Activated CD4-positive, alpha-beta T cell treated with anti-CD3 and anti-CD28 coated beads, Interleukin-2, amount 10 ng/mL, durations not matched to agents 24 days and 14 days (primary cell): ENCODE measurements at regions of chr13 and their contacts with region 1.

Region 1: DNA sequence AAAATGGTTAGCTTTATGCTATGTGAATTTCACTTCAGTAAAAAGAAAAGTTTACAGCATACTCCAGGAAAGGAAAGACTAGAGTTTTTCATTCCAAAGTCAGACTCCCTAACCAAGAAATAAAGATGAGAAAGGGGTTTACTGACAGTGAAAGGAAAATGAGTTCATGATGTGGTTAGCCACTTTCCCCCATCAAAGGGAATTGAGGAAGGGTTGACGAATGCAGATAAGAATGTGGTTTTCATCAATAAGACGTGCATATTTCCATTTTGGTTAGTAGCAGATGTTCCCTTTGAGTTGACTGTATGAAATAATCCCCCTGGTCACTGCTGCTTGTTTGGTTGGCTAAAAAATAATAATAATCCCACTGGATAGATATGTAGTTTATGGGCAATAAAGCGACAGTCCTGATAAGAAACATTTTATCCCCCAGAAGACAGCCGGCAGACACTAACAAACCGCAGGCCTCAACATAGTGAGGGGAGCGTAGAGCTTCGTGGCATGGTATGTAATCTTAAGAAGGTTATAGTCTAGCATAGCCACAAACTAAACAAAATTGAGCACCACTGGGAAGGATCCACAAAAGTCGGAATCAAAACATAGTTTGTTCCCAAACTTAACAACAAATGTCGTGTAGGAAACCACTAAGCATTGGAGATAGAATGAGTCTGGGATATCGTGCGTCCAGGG is 114.8 kb downstream of the COL4A2 start:
- DNase-seq: peak; percentile 74
- H3K4me3 Mint-ChIP-seq: no peak overlapping the region
- H3K27ac Mint-ChIP-seq: peak overlapping the region; percentile 42
- H3K4me1 Mint-ChIP-seq: peaks cover 17% of the 10 kb centered on the region
- H3K27me3 Mint-ChIP-seq: peaks cover 87% of the 10 kb centered on the region

Region 2: DNA sequence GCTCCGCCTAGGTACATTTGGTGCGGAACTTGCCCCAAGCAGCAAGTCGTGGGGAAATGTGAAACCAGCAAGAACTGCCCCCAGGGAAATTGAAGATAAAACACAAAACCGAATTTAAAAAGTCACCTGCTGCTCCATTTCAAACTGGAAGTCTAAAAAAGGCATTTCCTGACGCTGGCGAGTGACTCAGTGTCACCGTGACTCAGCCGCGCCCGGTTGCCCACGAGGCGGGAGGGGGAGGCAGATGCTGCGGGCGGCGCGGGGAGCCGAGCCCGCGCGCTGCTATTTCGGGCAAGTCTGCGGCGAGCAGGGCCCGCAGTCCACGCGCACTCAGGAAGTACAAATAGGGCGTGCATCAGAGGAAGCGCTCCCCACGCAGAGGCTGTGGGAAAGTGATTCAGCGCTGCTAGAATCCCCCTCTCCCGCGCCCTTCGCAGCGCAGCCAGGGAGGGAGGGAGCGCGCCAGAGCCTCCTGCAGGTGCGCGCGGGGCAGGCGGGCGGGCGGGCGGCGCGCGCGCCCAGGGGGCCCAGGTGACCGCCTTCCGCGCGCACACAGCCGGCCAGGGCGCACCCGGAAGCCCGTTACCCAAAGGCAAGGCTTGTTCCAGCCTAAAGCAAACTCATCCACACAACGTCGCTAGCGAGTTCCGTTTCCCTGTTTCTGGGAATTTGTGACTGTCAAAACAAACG is 283.7 kb before region 1 on chr13:
- intact Hi-C with region 1: loop called (anchors 10 kb)
- DNase-seq: peak; percentile 90
- H3K4me3 Mint-ChIP-seq: peak overlapping the region; percentile 84
- H3K27ac Mint-ChIP-seq: peak overlapping the region; percentile 82
- H3K4me1 Mint-ChIP-seq: peaks cover 13% of the 10 kb centered on the region
- H3K27me3 Mint-ChIP-seq: peaks cover 58% of the 10 kb centered on the region

Region 3: DNA sequence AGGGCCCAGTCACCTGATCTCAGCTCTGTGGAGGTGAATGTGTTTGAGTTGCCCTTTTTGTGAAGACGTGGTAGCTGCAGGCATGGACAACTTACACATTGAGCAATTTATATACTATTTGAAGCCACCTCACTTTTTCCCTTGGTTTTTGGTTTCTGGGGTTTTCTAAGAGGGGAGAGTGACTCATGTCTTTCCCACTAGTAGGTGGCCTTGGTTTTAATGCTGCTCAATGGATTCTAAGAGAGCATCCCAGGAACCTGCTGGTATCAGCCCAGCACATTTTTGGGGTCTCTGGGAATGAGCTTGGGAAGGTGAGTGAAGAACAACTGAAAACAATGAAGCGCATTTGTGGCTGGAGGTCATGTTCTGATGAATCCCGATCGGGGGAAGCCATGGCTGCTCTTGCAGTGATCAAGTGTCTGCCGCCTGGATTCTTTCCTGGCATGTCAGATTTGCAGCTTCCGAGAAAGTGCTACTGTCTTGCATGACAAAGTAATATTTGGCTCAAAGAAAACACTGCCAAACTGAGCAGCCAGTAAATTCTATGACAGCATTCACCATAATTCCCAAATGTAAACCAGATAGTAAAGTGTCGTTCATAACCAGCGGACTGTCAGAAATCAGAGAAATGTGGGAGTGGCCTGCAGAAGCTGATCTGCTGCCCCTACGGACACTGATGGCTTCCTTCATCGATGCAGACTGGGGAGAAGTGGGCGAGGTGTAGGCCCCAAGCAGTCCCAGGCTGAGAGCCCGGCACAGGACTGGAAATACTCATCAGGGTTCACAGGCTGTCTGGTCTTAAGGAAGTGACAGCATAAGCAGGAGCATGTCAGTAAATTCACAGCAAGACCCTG is 16.0 kb before region 1 on chr13:
- intact Hi-C with region 1: loop called (anchors 1 kb)
- DNase-seq: no peak
- H3K4me3 Mint-ChIP-seq: no peak overlapping the region
- H3K27ac Mint-ChIP-seq: no peak overlapping the region
- H3K4me1 Mint-ChIP-seq: peaks cover 5% of the 10 kb centered on the region
- H3K27me3 Mint-ChIP-seq: peaks cover 61% of the 10 kb centered on the region